Heart left ventricle (tissue), 16 donors: ENCODE measurements at regions of chr13 and their contacts with region 1.

Region 1: GRCh38 chr13:80276371-80277289 is 64.3 kb downstream of the SPRY2 start:
- DNase-seq: peak in 1 of 5 donors; percentile 27
- ATAC-seq: peak in 3 of 4 donors; percentile 75 to 95 (median 84)
- H3K4me3 ChIP-seq: no peak overlapping the region
- H3K27ac ChIP-seq: peak overlapping the region in 7 of 12 donors; percentile 9 to 60 (median 21)
- H3K4me1 ChIP-seq: peaks cover 0 to 23% (median 9%) of the 10 kb centered on the region in 12 donors
- H3K27me3 ChIP-seq: no peaks in the 10 kb centered on the region
- CTCF ChIP-seq: peak in 2 of 12 donors; percentile 7 to 25
- POLR2A ChIP-seq: no peak

Region 2: GRCh38 chr13:80173224-80173623 is 103.4 kb before region 1 on chr13:
- intact Hi-C with region 1: no loop called
- DNase-seq: peak in 4 of 5 donors; percentile 20 to 46 (median 30)
- ATAC-seq: peak in 3 of 4 donors; percentile 36 to 64 (median 49)
- H3K4me3 ChIP-seq: no peak overlapping the region
- H3K27ac ChIP-seq: peak overlapping the region in 1 of 12 donors; percentile 37
- H3K4me1 ChIP-seq: peaks cover 0 to 24% (median 0%) of the 10 kb centered on the region in 12 donors
- H3K27me3 ChIP-seq: no peaks in the 10 kb centered on the region
- CTCF ChIP-seq: no peak
- POLR2A ChIP-seq: no peak

Region 3: DNA sequence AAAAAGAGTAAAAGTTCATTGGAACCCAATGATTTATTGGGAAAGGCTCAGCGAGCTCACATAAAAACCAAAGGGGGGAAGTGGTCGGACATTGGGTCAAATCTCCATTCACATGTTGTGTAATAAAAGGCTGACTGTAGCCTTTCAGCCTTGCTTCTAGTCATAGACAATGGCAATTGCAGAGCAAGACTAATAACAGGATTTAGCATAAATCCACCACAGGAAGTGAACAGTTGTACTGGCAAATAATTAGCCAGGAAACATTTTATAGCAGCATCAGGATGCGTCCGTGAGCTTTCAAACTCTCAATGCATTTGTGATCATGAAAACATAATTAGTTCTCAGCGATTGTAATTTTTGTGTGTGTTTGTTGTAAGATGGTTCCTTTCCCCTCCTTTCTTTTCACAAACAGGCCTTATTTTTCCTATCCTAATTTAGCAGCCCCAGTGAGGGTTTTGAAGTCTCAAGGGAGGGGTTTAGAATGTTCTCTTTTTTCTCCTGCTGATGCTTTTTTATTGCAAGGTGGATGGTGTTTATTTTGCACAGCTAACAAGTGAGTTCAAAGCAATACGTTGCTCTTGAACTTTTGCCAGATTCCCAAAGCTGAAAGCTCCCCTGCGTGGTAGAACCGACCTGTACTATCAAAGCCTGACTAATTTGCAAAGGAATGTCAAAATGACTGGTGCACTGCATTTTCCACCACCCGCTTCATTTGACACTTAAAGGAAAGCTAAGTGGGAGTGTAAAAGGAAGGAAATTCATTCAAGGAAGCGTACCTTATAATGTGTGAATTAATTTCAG is 41.3 kb before region 1 on chr13:
- intact Hi-C with region 1: loop called in 1 of 10 experiments (anchors 5 kb)
- DNase-seq: no peak
- ATAC-seq: peak in 3 of 4 donors; percentile 32 to 34 (median 32)
- H3K4me3 ChIP-seq: peak overlapping the region in 6 of 12 donors; percentile 1 to 33 (median 17)
- H3K27ac ChIP-seq: peak overlapping the region in 6 of 12 donors; percentile 2 to 50 (median 20)
- H3K4me1 ChIP-seq: peaks cover 0 to 11% (median 7%) of the 10 kb centered on the region in 12 donors
- H3K27me3 ChIP-seq: no peaks in the 10 kb centered on the region
- CTCF ChIP-seq: no peak
- POLR2A ChIP-seq: no peak